ENCODE measurements at regions of chr12 and their contacts with region 1.

Region 1: DNA sequence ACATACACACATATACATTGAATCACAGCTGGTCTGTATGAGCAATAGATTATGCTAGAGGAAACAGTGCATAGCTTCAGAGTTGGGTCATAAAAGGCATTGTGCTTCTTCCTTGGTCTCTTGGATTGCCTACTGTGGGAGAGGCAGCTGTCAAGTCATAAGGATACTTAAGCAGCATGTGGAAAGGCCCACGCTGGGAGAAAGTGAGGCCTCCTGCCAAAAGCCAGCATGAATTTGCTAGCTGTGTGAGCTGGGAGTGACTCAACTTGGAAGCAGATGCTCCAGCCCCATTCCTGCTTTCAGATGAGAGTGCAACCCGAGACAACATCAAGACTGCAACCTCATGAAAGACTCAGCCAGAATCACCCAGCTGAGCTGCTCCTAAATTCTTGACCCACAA is 311.9 kb upstream of the TBX3 start:
- DNase-seq: no peak
- ATAC-seq: no peak
- H3K4me3 ChIP-seq: no peak overlapping the region
- H3K27ac ChIP-seq: no peak overlapping the region
- H3K4me1 ChIP-seq: no peaks in the 10 kb centered on the region
- H3K27me3 ChIP-seq: no peaks in the 10 kb centered on the region
- CTCF ChIP-seq: no peak
- EP300 ChIP-seq: no peak
- POLR2A ChIP-seq: no peak
- RAD21 ChIP-seq: no peak

Region 2: GRCh38 chr12:114982760-114983159 is 13.1 kb before region 1 on chr12:
- CTCF ChIA-PET with region 1: no interaction called
- POLR2A ChIA-PET with region 1: interaction called, 4 read pairs
- RAD21 ChIA-PET with region 1: no interaction called
- SMC1A ChIA-PET with region 1: interaction called, 14 read pairs
- in situ Hi-C with region 1: no loop called
- intact Hi-C with region 1: no loop called
- DNase-seq: no peak
- ATAC-seq: no peak
- H3K4me3 ChIP-seq: no peak overlapping the region
- H3K27ac ChIP-seq: no peak overlapping the region
- H3K4me1 ChIP-seq: no peaks in the 10 kb centered on the region
- H3K27me3 ChIP-seq: no peaks in the 10 kb centered on the region
- CTCF ChIP-seq: no peak
- EP300 ChIP-seq: no peak
- POLR2A ChIP-seq: no peak
- RAD21 ChIP-seq: no peak

Region 3: DNA sequence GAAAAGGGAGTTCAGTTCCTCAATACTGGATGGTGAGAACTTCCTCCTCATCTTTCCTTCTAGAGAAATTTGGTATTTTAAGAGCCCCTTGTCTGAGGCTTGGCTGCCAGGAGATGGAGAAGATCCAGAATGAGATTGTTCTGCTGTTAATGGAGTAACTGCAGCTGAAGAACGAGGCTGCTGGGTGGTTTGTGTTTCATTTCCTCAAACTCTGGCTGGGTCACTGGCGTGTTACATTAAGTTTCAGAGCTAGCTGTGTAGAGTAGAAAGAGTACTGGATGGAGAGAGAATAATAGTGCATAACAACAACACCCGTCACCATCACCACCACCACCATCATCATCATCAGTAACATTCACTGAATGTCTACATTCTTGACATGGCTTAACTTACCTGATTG is 13.0 kb after region 1 on chr12:
- CTCF ChIA-PET with region 1: no interaction called
- POLR2A ChIA-PET with region 1: no interaction called
- RAD21 ChIA-PET with region 1: interaction called, 3 read pairs
- SMC1A ChIA-PET with region 1: interaction called, 11 read pairs
- in situ Hi-C with region 1: no loop called
- intact Hi-C with region 1: no loop called
- DNase-seq: peak; percentile 11
- ATAC-seq: peak; percentile 61
- H3K4me3 ChIP-seq: no peak overlapping the region
- H3K27ac ChIP-seq: no peak overlapping the region
- H3K4me1 ChIP-seq: no peaks in the 10 kb centered on the region; the same call in 1 of the 2 replicates
- H3K27me3 ChIP-seq: no peaks in the 10 kb centered on the region
- CTCF ChIP-seq: no peak
- EP300 ChIP-seq: no peak
- POLR2A ChIP-seq: no peak
- RAD21 ChIP-seq: no peak